Activated CD4-positive, alpha-beta T cell treated with anti-CD3 and anti-CD28 coated beads, Interleukin-2, amount 10 ng/mL, durations not matched to agents 24 days and 14 days (primary cell): ENCODE measurements at regions of chr7 and their contacts with region 1.

Region 1: DNA sequence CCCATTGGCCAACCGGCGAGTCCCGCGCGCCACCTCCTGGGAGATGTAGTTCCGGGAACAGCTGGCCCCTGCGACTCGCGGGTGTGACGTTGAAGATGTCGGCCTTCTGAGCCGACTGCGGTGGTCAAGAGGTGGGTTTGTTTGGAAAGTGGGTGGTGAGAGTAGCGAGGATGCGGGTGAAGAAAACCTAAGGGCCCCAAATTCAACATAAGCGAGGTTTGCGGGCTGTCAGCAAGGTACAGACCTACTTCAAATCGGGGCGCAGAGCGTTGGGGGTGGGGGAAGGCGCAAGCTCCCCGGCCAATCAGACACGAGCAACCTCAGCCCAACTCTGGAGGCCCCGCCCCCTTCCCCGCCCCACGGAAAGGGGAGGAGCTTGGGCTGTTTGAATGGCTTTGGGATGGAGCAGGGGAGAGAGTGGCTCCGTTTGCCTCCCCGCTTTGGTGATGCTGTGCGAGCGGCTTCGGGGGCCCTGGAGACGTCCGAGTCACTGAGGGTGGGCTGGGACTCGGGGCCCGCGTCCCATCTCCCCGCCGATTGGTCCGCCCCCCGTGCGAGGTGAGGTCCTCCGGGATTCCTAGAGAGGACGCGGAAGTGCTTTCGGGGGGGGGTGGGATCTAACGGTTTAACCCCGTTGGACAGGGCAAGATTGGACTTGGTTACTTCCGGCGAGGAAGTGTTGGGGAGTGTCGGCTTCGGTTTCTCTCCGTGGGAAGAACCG is at the start of gene ZKSCAN5:
- DNase-seq: peak; percentile 99
- H3K4me3 Mint-ChIP-seq: peak within 1 kb of the TSS; percentile 91
- H3K27ac Mint-ChIP-seq: peak within 1 kb of the TSS; percentile 95
- H3K4me1 Mint-ChIP-seq: peaks cover 23% of the 10 kb centered on the region
- H3K27me3 Mint-ChIP-seq: no peaks in the 10 kb centered on the region
- total RNA-seq, gene ZKSCAN5: 7.2 TPM in 2 replicates

Region 2: DNA sequence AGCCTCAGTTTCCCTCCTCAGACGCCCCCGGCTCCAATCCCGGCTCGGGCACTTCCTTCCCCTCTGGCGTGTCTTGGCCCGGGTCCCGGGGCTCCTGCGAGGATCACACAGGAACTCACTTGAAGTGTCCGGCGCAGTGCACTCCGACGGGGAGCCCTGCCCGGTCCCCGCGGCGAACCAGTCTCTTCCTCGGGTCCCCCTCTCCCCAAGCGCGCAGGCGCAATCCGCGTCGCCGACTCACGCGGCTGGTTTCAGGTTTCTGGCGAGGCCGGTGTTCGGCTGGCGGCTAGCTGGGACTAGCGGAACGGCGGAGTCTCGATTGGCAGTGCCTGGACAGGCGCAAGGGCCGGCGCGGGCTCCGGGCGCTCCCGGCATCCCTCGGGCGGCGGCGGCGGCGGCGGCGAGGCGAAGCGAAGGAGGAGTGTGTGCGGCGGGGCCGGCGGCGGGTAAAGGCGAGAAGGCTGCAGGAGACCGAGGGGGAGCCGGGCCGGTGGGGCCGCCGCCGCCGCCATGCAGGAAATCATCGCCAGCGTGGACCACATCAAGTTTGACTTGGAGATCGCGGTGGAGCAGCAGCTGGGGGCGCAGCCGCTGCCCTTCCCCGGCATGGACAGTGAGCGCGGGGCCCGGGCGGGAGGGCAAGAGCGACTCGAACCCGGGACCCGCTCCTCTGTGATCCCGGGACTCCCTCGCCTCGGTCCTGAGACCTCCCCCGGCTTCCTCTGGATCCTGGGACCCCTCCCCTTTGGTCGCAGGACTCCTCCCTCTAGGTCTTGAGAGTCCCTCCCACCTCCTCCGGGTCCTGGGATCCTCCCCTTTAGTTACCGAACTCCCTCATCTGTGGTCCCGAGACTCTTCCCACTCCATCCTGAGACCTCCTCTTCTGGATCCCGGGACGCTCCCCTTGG is 65.9 kb before region 1 on chr7 and contains the starts of genes CPSF4 and PTCD1:
- intact Hi-C with region 1: loop called (anchors 2 kb)
- DNase-seq: peak; percentile 97
- H3K4me3 Mint-ChIP-seq: peak within 1 kb of the TSS; percentile 96
- H3K27ac Mint-ChIP-seq: peak within 1 kb of the TSS; percentile 89
- H3K4me1 Mint-ChIP-seq: peaks cover 23% of the 10 kb centered on the region
- H3K27me3 Mint-ChIP-seq: no peaks in the 10 kb centered on the region
- total RNA-seq, gene CPSF4: 83.5 and 89.0 TPM in 2 replicates
- total RNA-seq, gene PTCD1: 10.5 and 10.7 TPM in 2 replicates

Region 3: DNA sequence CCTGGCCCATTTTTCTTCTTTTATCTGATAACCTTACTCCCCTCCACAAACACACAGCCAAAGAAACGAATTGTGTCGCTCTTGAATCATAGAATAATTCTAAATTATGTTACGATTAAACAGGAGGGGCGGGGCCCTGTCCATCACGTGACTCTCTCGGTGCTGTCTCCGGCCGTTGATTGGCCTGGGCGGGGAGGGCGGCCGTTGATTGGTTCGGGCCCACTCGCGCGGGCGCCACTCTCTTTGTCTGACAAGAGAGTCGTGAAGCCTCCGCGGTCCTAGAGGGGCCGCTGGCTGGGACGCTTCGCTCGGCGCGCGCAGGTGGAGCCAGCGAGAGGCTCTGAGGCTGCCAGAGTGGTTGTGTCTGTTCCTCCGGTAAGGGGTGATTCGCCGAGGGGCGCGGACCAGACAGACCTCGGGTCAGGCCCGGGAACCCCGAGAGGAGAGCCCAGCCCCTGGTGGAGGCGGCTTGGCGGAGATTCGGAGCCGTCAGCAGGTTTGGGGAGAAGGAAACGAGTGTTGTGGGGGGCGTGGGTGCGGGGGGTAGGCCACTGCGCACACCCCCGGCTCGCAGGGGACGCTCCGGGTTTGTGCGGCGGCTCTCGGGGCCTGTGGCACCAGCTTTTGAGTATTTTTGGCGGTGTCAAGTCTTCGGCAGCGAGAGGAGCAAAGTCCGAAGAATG is 32.1 kb before region 1 on chr7 and contains the start of gene ZNF789:
- intact Hi-C with region 1: loop called (anchors 1 kb)
- DNase-seq: peak; percentile 99
- H3K4me3 Mint-ChIP-seq: peak within 1 kb of the TSS; percentile 100
- H3K27ac Mint-ChIP-seq: peak within 1 kb of the TSS; percentile 93
- H3K4me1 Mint-ChIP-seq: peaks cover 28% of the 10 kb centered on the region
- H3K27me3 Mint-ChIP-seq: peaks cover 1% of the 10 kb centered on the region
- total RNA-seq, gene ZNF789: 22.6 and 23.6 TPM in 2 replicates

Region 4: DNA sequence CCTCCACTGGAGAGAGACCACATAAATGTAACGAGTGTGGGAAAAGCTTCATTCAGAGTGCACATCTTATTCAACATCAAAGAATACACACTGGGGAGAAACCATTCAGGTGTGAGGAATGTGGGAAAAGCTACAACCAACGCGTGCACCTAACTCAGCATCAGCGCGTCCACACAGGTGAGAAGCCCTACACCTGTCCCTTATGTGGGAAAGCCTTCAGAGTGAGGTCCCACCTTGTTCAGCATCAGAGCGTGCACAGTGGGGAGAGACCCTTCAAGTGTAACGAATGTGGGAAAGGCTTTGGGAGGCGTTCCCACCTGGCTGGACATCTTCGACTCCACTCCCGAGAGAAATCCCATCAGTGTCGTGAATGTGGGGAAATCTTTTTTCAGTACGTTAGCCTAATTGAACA is 26.6 kb after region 1 on chr7:
- intact Hi-C with region 1: no loop called
- DNase-seq: no peak
- H3K4me3 Mint-ChIP-seq: no peak overlapping the region
- H3K27ac Mint-ChIP-seq: no peak overlapping the region
- H3K4me1 Mint-ChIP-seq: no peaks in the 10 kb centered on the region
- H3K27me3 Mint-ChIP-seq: no peaks in the 10 kb centered on the region

Region 5: DNA sequence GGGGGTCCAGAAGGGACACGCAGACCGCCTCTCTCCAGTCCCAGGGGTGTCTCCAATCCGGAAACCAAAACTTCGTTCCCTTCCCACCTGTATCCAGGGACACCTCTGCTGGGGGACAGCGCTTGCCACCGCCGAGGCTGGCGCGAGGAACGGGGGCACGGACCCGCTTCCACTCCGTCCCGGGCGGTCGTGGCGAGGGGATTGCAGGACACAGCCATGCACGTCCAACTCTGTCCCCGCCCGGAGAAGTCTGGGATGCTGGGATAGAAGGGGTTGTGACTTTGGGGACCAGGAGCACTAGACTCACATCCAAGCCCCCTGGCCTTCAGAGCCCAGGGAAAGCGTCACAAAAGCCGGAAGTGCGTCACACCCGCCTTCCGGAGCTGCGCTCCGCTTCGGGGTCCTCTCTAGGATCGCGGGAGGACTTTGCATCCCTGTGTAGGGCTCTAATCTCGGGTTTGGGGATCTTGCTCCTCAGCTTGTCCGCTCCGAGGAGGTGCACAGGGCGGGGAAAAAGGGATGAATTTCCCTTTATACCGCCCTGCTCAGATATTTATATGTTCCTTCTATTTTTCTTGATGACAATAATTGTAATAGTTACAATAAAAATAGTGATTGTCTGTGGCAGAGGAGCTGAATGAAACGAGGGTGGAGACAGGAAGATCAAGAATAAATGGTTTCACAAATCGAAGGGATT is 47.2 kb after region 1 on chr7 and contains the start of gene FAM200A:
- intact Hi-C with region 1: loop called (anchors 1 kb)
- DNase-seq: peak; percentile 95
- H3K4me3 Mint-ChIP-seq: peak within 1 kb of the TSS; percentile 94
- H3K27ac Mint-ChIP-seq: peak within 1 kb of the TSS; percentile 91
- H3K4me1 Mint-ChIP-seq: peaks cover 21% of the 10 kb centered on the region
- H3K27me3 Mint-ChIP-seq: no peaks in the 10 kb centered on the region
- total RNA-seq, gene FAM200A: 4.7 and 5.8 TPM in 2 replicates

Region 6: GRCh38 chr7:99558306-99559174 is 53.8 kb after region 1 on chr7 and contains the start of gene ZNF655:
- intact Hi-C with region 1: loop called (anchors 1 kb)
- DNase-seq: peak; percentile 97
- H3K4me3 Mint-ChIP-seq: peak within 1 kb of the TSS; percentile 100
- H3K27ac Mint-ChIP-seq: peak within 1 kb of the TSS; percentile 99
- H3K4me1 Mint-ChIP-seq: peaks cover 40% of the 10 kb centered on the region
- H3K27me3 Mint-ChIP-seq: no peaks in the 10 kb centered on the region
- total RNA-seq, gene ZNF655: 76.2 and 76.4 TPM in 2 replicates

Region 7: GRCh38 chr7:99616359-99617191 is 111.8 kb after region 1 on chr7 and contains the start of gene ZSCAN25:
- intact Hi-C with region 1: loop called (anchors 2 kb)
- DNase-seq: peak; percentile 95
- H3K4me3 Mint-ChIP-seq: peak within 1 kb of the TSS; percentile 96
- H3K27ac Mint-ChIP-seq: peak within 1 kb of the TSS; percentile 97
- H3K4me1 Mint-ChIP-seq: peaks cover 35% of the 10 kb centered on the region
- H3K27me3 Mint-ChIP-seq: no peaks in the 10 kb centered on the region
- total RNA-seq, gene ZSCAN25: 29.4 and 30.0 TPM in 2 replicates

Region 8: GRCh38 chr7:99918959-99919813 is 414.4 kb after region 1 on chr7 and contains the start of gene TRIM4:
- intact Hi-C with region 1: loop called (anchors 1 kb)
- DNase-seq: peak; percentile 97
- H3K4me3 Mint-ChIP-seq: peak within 1 kb of the TSS; percentile 95
- H3K27ac Mint-ChIP-seq: peak within 1 kb of the TSS; percentile 92
- H3K4me1 Mint-ChIP-seq: peaks cover 39% of the 10 kb centered on the region
- H3K27me3 Mint-ChIP-seq: no peaks in the 10 kb centered on the region
- total RNA-seq, gene TRIM4: 22.3 and 24.0 TPM in 2 replicates

Region 9: DNA sequence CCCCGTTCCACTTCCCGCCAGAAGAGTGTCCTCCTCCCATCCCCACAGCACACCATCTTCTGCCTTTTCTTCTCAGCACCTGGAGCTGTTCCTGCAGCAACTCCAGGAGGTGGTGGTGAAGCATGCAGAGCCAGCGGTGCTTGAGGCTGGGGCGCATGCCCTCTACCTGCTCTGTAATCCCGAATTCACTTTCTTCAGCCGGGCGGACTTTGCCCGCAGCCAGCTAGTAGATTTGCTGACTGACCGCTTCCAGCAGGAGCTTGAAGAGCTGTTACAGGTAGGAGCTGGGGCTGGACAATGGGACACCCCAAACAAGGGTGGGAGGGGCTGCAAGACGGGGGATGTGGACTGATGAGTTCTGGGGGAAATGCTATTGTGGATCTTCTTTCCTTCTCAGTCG is 695.9 kb after region 1 on chr7:
- intact Hi-C with region 1: no loop called
- DNase-seq: no peak
- H3K4me3 Mint-ChIP-seq: no peak overlapping the region
- H3K27ac Mint-ChIP-seq: no peak overlapping the region
- H3K4me1 Mint-ChIP-seq: peaks cover 8% of the 10 kb centered on the region
- H3K27me3 Mint-ChIP-seq: no peaks in the 10 kb centered on the region